Activated CD4-positive, alpha-beta T cell treated with anti-CD3 and anti-CD28 coated beads for 36 hours (primary cell): ENCODE measurements at regions of chrX and their contacts with region 1.

Region 1: DNA sequence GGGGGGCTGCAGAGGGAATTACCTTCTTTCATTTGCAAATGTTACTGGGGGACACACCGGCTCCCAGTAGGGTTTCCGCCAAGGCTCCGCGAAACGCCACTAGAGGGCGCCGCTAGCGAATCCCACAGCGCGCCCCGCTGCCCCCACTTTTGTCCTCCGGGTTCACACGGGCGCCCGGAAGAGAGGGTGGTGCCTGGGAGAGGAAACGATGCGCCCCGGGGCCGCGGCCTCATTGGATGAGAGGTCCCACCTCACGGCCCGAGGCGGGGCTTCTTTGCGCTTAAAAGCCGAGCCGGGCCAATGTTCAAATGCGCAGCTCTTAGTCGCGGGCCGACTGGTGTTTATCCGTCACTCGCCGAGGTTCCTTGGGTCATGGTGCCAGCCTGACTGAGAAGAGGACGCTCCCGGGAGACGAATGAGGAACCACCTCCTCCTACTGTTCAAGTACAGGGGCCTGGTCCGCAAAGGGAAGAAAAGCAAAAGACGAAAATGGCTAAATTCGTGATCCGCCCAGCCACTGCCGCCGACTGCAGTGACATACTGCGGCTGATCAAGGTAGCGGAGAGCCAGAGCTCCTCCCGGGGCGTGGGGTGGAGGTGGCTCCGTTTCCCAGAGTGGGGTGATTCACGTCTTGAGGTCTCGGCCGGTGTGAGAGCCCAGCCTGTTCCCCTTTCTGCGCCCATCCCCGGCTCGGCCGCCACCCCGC is at the start of gene SAT1:
- DNase-seq: peak; percentile 97
- ATAC-seq: peak; percentile 86
- H3K4me3 Mint-ChIP-seq: peak within 1 kb of the TSS; percentile 92
- H3K27ac Mint-ChIP-seq: peak within 1 kb of the TSS; percentile 97
- H3K4me1 Mint-ChIP-seq: peaks cover 28% of the 10 kb centered on the region
- H3K27me3 Mint-ChIP-seq: no peaks in the 10 kb centered on the region
- total RNA-seq, gene SAT1: 148 to 166 TPM

Region 2: GRCh38 chrX:23694606-23695005 is 88.4 kb before region 1 on chrX:
- CTCF ChIA-PET with region 1: interaction called, 4 read pairs
- POLR2A ChIA-PET with region 1: interaction called, 6 read pairs
- intact Hi-C with region 1: loop called in 1 of 2 experiments (anchors 2 kb)
- DNase-seq: peak; percentile 60
- ATAC-seq: peak; percentile 55
- H3K4me3 Mint-ChIP-seq: no peak overlapping the region
- H3K27ac Mint-ChIP-seq: no peak overlapping the region
- H3K4me1 Mint-ChIP-seq: no peaks in the 10 kb centered on the region
- H3K27me3 Mint-ChIP-seq: no peaks in the 10 kb centered on the region

Region 3: GRCh38 chrX:23766650-23767551 is 16.1 kb before region 1 on chrX:
- CTCF ChIA-PET with region 1: interaction called, 3 read pairs
- POLR2A ChIA-PET with region 1: interaction called, 6 read pairs
- intact Hi-C with region 1: loop called in 1 of 2 experiments (anchors 1 kb)
- DNase-seq: peak; percentile 47
- ATAC-seq: peak; percentile 83
- H3K4me3 Mint-ChIP-seq: peak overlapping the region; percentile 68
- H3K27ac Mint-ChIP-seq: peak overlapping the region; percentile 80
- H3K4me1 Mint-ChIP-seq: peaks cover 10% of the 10 kb centered on the region
- H3K27me3 Mint-ChIP-seq: no peaks in the 10 kb centered on the region

Region 4: DNA sequence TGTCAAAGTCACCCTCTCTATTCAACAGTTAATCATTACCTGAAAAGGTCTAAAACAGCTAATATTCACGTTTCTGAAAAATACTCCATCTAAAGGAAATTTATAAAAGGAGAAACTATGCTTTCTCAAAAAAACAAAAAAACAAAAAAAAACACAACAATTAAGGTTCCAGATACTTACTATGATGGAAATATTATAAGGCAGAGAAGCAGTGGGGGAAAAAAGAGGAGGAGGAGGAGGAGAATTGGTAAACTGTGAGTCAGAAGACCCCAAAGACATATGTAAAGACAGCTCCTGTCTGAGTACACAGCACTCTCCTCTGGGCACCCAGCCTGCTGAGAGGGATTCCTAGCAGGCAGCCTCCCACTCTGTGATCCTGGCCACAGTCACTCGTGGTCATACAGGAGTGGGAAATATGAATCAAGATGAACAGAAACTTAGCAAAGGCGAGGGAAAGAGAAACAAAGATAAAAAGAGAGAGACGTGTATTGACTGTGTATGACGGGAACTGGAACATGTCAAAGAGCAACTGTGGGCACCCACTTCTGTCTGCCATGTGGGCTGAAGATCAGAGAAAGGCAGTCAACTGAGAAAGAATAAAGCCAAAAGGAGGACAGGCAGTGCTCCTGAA is 231.5 kb after region 1 on chrX:
- CTCF ChIA-PET with region 1: interaction called, 3 read pairs
- POLR2A ChIA-PET with region 1: no interaction called
- intact Hi-C with region 1: loop called in 1 of 2 experiments (anchors 5 kb)
- DNase-seq: peak; percentile 77
- ATAC-seq: peak; percentile 92
- H3K4me3 Mint-ChIP-seq: peak overlapping the region; percentile 62
- H3K27ac Mint-ChIP-seq: peak overlapping the region; percentile 93
- H3K4me1 Mint-ChIP-seq: peaks cover 42% of the 10 kb centered on the region
- H3K27me3 Mint-ChIP-seq: no peaks in the 10 kb centered on the region

Region 5: GRCh38 chrX:24150051-24150790 is 367.2 kb after region 1 on chrX:
- CTCF ChIA-PET with region 1: no interaction called
- POLR2A ChIA-PET with region 1: no interaction called
- intact Hi-C with region 1: loop called (anchors 1 to 10 kb)
- DNase-seq: peak; percentile 92
- ATAC-seq: peak; percentile 81
- H3K4me3 Mint-ChIP-seq: peak overlapping the region; percentile 93
- H3K27ac Mint-ChIP-seq: peak overlapping the region; percentile 97
- H3K4me1 Mint-ChIP-seq: peaks cover 50% of the 10 kb centered on the region
- H3K27me3 Mint-ChIP-seq: no peaks in the 10 kb centered on the region